A673 (cell line): ENCODE measurements at regions of chr1 and their contacts with region 1.

Region 1: DNA sequence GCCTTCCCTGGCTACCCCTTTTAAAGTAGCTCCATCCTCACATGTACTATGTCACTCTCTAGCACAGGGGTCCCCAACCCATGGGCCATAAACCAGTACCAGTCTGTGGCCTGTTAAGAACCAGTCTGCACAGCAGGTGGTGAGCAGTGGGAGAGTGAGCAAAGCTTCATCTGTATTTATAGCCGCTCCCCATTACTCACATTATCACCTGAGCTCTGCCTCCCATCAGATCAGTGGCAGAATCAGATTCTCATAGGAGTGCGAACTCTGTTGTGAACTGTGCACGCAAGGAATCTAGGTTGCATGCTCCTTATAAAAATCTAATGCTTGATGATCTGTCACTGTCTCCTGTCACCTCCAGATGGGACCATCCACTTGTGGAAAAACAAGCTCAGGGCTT is 116.6 kb upstream of the FOXD3 start:
- DNase-seq: no peak
- H3K4me3 ChIP-seq: no peak overlapping the region
- H3K27ac ChIP-seq: no peak overlapping the region
- H3K4me1 ChIP-seq: no peaks in the 10 kb centered on the region
- H3K27me3 ChIP-seq: no peaks in the 10 kb centered on the region
- CTCF ChIP-seq: no peak

Region 2: GRCh38 chr1:63189677-63190076 is 16.1 kb before region 1 on chr1:
- CTCF ChIA-PET with region 1: no interaction called
- POLR2A ChIA-PET with region 1: no interaction called
- intact Hi-C with region 1: loop called (anchors 1 kb)
- DNase-seq: peak; percentile 17
- H3K4me3 ChIP-seq: no peak overlapping the region
- H3K27ac ChIP-seq: no peak overlapping the region
- H3K4me1 ChIP-seq: no peaks in the 10 kb centered on the region
- H3K27me3 ChIP-seq: no peaks in the 10 kb centered on the region
- CTCF ChIP-seq: peak; percentile 61

Region 3: GRCh38 chr1:63276624-63277023 is 70.8 kb after region 1 on chr1:
- CTCF ChIA-PET with region 1: no interaction called
- POLR2A ChIA-PET with region 1: no interaction called
- intact Hi-C with region 1: no loop called
- DNase-seq: peak; percentile 21
- H3K4me3 ChIP-seq: no peak overlapping the region
- H3K27ac ChIP-seq: no peak overlapping the region
- H3K4me1 ChIP-seq: peaks cover 25% of the 10 kb centered on the region
- H3K27me3 ChIP-seq: no peaks in the 10 kb centered on the region
- CTCF ChIP-seq: no peak